SK-N-SH (cell line): ENCODE measurements at regions of chr11 and their contacts with region 1.

Region 1: GRCh38 chr11:78645226-78646202 is 70.8 kb upstream of the NARS2 start:
- DNase-seq: peak; percentile 80
- H3K4me3 ChIP-seq: no peak overlapping the region; a peak in 1 of 4 replicates
- H3K27ac ChIP-seq: no peak overlapping the region
- H3K4me1 ChIP-seq: peaks cover 0 to 8% of the 10 kb centered on the region in 2 experiments; a peak in 1 of 4 replicates
- H3K27me3 ChIP-seq: no peaks in the 10 kb centered on the region
- CTCF ChIP-seq: peak; percentile 98
- EP300 ChIP-seq: no peak
- RAD21 ChIP-seq: peak; percentile 97

Region 2: GRCh38 chr11:78666675-78667160 is 21.2 kb after region 1 on chr11:
- CTCF ChIA-PET with region 1: interaction called, 32 read pairs
- POLR2A ChIA-PET with region 1: no interaction called
- DNase-seq: no peak
- H3K4me3 ChIP-seq: no peak overlapping the region
- H3K27ac ChIP-seq: no peak overlapping the region
- H3K4me1 ChIP-seq: no peaks in the 10 kb centered on the region
- H3K27me3 ChIP-seq: no peaks in the 10 kb centered on the region
- CTCF ChIP-seq: no peak
- EP300 ChIP-seq: no peak
- RAD21 ChIP-seq: no peak

Region 3: GRCh38 chr11:78722786-78723185 is 77.3 kb after region 1 on chr11:
- CTCF ChIA-PET with region 1: interaction called, 77 read pairs
- POLR2A ChIA-PET with region 1: no interaction called
- DNase-seq: no peak
- H3K4me3 ChIP-seq: no peak overlapping the region
- H3K27ac ChIP-seq: no peak overlapping the region; a peak in 1 of 4 replicates
- H3K4me1 ChIP-seq: peaks cover 0 to 15% of the 10 kb centered on the region in 2 experiments; a peak in 2 of 4 replicates
- H3K27me3 ChIP-seq: no peaks in the 10 kb centered on the region
- CTCF ChIP-seq: no peak
- EP300 ChIP-seq: no peak
- RAD21 ChIP-seq: no peak

Region 4: GRCh38 chr11:78828671-78829070 is 183.2 kb after region 1 on chr11:
- CTCF ChIA-PET with region 1: interaction called, 10 read pairs
- POLR2A ChIA-PET with region 1: no interaction called
- DNase-seq: no peak
- H3K4me3 ChIP-seq: no peak overlapping the region
- H3K27ac ChIP-seq: peak overlapping the region in 1 of 2 experiments; percentile 85; a peak in 2 of 4 replicates
- H3K4me1 ChIP-seq: peaks cover 0 to 31% of the 10 kb centered on the region in 2 experiments; a peak in 2 of 4 replicates
- H3K27me3 ChIP-seq: no peaks in the 10 kb centered on the region
- CTCF ChIP-seq: no peak
- EP300 ChIP-seq: no peak
- RAD21 ChIP-seq: no peak

Region 5: GRCh38 chr11:78961247-78961646 is 315.7 kb after region 1 on chr11:
- CTCF ChIA-PET with region 1: interaction called, 103 read pairs
- POLR2A ChIA-PET with region 1: interaction called, 3 read pairs
- DNase-seq: peak; percentile 66
- H3K4me3 ChIP-seq: peak overlapping the region; percentile 58 to 68; a peak in 3 of 4 replicates
- H3K27ac ChIP-seq: peak overlapping the region in 1 of 2 experiments; percentile 87; a peak in 2 of 4 replicates
- H3K4me1 ChIP-seq: peaks cover 10 to 46% of the 10 kb centered on the region in 2 experiments; a peak in 3 of 4 replicates
- H3K27me3 ChIP-seq: no peaks in the 10 kb centered on the region
- CTCF ChIP-seq: peak; percentile 58
- EP300 ChIP-seq: no peak
- RAD21 ChIP-seq: peak; percentile 81

Region 6: DNA sequence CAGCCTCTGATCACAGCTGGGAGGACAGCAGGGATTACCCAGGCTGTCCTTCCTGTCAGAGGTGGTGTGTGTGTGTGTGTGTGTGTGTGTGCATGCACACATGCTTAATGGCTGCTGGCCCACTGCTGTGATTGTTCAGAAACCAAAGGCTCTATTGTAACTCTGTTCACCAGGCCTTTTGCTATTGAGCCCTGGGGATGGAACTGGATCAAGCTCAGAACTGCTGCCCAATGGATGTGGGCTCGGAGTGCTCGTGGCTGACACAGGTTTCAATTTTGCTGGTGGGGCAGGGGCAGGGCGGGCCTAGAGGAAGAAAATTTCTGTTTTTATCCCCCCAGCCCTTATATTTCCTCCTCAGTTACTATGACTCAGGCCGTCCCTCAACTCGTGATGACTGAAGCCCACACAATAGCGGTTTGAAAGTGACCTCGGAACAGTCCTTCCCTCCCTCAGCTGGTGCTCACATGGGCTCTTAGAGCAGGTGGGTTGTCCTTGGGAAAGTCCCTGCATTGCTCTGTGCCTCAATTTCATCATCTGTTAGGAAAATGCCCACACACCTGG is 436.0 kb after region 1 on chr11:
- CTCF ChIA-PET with region 1: interaction called, 27 read pairs
- POLR2A ChIA-PET with region 1: no interaction called
- DNase-seq: no peak
- H3K4me3 ChIP-seq: no peak overlapping the region
- H3K27ac ChIP-seq: peak overlapping the region; percentile 50 to 85
- H3K4me1 ChIP-seq: peaks cover 36 to 64% of the 10 kb centered on the region in 2 experiments
- H3K27me3 ChIP-seq: no peaks in the 10 kb centered on the region
- CTCF ChIP-seq: no peak
- EP300 ChIP-seq: no peak
- RAD21 ChIP-seq: no peak

Region 7: GRCh38 chr11:79440441-79441194 is 795.1 kb after region 1 on chr11 and contains the start of gene TENM4:
- CTCF ChIA-PET with region 1: interaction called, 21 read pairs
- POLR2A ChIA-PET with region 1: no interaction called
- DNase-seq: peak; percentile 86
- H3K4me3 ChIP-seq: peak within 1 kb of the TSS; percentile 91 to 92
- H3K27ac ChIP-seq: peak within 1 kb of the TSS; percentile 76 to 91
- H3K4me1 ChIP-seq: peaks cover 9 to 22% of the 10 kb centered on the region in 2 experiments; a peak in 2 of 4 replicates
- H3K27me3 ChIP-seq: no peaks in the 10 kb centered on the region
- CTCF ChIP-seq: peak; percentile 63
- EP300 ChIP-seq: no peak
- RAD21 ChIP-seq: peak; percentile 36; the same call in 1 of the 2 replicates
- polyA plus RNA-seq, gene TENM4: 6.0 and 16.7 TPM in 2 replicates